ENCODE measurements at regions of chr12 and their contacts with region 1.

Region 1: GRCh38 chr12:45728630-45729232 is 775 bp upstream of the ARID2 start:
- DNase-seq: peak; percentile 94 to 99 (median 96)
- ATAC-seq: peak; percentile 71
- H3K4me3 ChIP-seq: peak overlapping the region; percentile 77
- H3K4me3 Mint-ChIP-seq: peak overlapping the region; percentile 100
- H3K27ac ChIP-seq: peak overlapping the region; percentile 98 to 99
- H3K27ac Mint-ChIP-seq: peak overlapping the region; percentile 84
- H3K4me1 ChIP-seq: peaks cover 8% of the 10 kb centered on the region
- H3K4me1 Mint-ChIP-seq: peaks cover 37% of the 10 kb centered on the region
- H3K27me3 ChIP-seq: no peaks in the 10 kb centered on the region
- H3K27me3 Mint-ChIP-seq: no peaks in the 10 kb centered on the region
- CTCF ChIP-seq: peak; percentile 89

Region 2: GRCh38 chr12:45215419-45216229 is 513.1 kb before region 1 on chr12 and contains the start of gene ANO6:
- CTCF ChIA-PET with region 1: interaction called, 5 read pairs
- POLR2A ChIA-PET with region 1: interaction called, 30 read pairs
- intact Hi-C with region 1: loop called in 1 of 2 experiments (anchors 10 kb)
- DNase-seq: peak; percentile 53 to 90 (median 69)
- ATAC-seq: peak; percentile 78
- H3K4me3 ChIP-seq: peak within 1 kb of the TSS; percentile 92
- H3K4me3 Mint-ChIP-seq: peak within 1 kb of the TSS; percentile 93
- H3K27ac ChIP-seq: peak within 1 kb of the TSS; percentile 15 to 73
- H3K27ac Mint-ChIP-seq: peak within 1 kb of the TSS; percentile 86
- H3K4me1 ChIP-seq: peaks cover 20% of the 10 kb centered on the region
- H3K4me1 Mint-ChIP-seq: peaks cover 71% of the 10 kb centered on the region
- H3K27me3 ChIP-seq: no peaks in the 10 kb centered on the region
- H3K27me3 Mint-ChIP-seq: no peaks in the 10 kb centered on the region
- CTCF ChIP-seq: peak; percentile 53
- total RNA-seq, gene ANO6: 11.6 to 11.7 TPM

Region 3: DNA sequence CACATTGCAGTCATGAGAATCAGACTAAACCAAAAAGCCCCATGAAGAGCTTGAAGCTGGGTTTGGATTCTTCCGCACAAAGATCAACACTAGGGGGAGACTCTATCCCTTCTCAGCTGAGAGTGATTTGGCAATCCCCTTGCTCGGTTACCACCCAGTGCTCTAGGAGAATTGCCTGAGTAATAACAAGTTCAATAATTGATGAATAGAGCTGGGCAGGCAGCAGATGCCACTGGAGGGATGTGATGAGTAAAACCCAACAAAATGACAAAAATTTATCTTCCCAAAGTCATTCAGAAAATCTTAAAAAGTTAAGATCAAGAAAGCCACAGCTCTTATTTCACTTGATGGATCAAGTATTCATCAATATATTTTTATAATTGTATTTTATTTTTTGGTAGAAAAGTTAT is 184.8 kb before region 1 on chr12:
- CTCF ChIA-PET with region 1: interaction called, 27 read pairs
- POLR2A ChIA-PET with region 1: interaction called, 31 read pairs
- intact Hi-C with region 1: loop called in 1 of 2 experiments (anchors 2 kb)
- DNase-seq: peak in 12 of 14 experiments; percentile 3 to 83 (median 20)
- ATAC-seq: peak; percentile 87
- H3K4me3 ChIP-seq: no peak overlapping the region
- H3K4me3 Mint-ChIP-seq: no peak overlapping the region
- H3K27ac ChIP-seq: no peak overlapping the region
- H3K27ac Mint-ChIP-seq: no peak overlapping the region
- H3K4me1 ChIP-seq: no peaks in the 10 kb centered on the region
- H3K4me1 Mint-ChIP-seq: no peaks in the 10 kb centered on the region
- H3K27me3 ChIP-seq: no peaks in the 10 kb centered on the region
- H3K27me3 Mint-ChIP-seq: no peaks in the 10 kb centered on the region
- CTCF ChIP-seq: peak; percentile 83

Region 4: GRCh38 chr12:45655201-45655600 is 73.5 kb before region 1 on chr12:
- CTCF ChIA-PET with region 1: interaction called, 17 read pairs
- POLR2A ChIA-PET with region 1: interaction called, 25 read pairs
- intact Hi-C with region 1: loop called (anchors 1 to 5 kb)
- DNase-seq: peak; percentile 33 to 87 (median 55)
- ATAC-seq: peak; percentile 100
- H3K4me3 ChIP-seq: no peak overlapping the region
- H3K4me3 Mint-ChIP-seq: no peak overlapping the region
- H3K27ac ChIP-seq: no peak overlapping the region
- H3K27ac Mint-ChIP-seq: no peak overlapping the region
- H3K4me1 ChIP-seq: no peaks in the 10 kb centered on the region
- H3K4me1 Mint-ChIP-seq: peaks cover 8% of the 10 kb centered on the region
- H3K27me3 ChIP-seq: peaks cover 0 to 8% of the 10 kb centered on the region in 2 experiments
- H3K27me3 Mint-ChIP-seq: peaks cover 12% of the 10 kb centered on the region
- CTCF ChIP-seq: no peak

Region 5: DNA sequence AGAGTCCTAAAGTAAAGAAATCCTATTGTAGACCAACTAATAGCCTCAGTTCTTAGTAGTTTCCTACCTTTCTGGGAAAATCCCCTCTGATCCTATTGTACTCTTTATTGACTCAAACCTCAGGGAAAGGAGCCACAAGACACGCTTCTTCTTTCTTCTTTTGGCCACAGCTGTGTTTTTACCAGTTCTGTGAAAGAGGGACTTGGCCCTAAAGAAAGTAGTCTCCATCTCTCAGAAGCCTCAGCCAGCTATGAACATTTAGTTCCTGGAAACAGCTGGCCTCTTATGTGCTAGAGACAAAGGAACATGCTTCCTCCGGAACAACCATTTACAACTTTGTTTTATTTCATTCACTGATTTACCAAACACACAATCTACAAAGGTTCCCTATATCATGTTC is 65.3 kb before region 1 on chr12:
- CTCF ChIA-PET with region 1: interaction called, 5 read pairs
- POLR2A ChIA-PET with region 1: interaction called, 77 read pairs
- intact Hi-C with region 1: loop called in 1 of 2 experiments (anchors 5 kb)
- DNase-seq: no peak
- ATAC-seq: no peak
- H3K4me3 ChIP-seq: no peak overlapping the region
- H3K4me3 Mint-ChIP-seq: no peak overlapping the region
- H3K27ac ChIP-seq: no peak overlapping the region
- H3K27ac Mint-ChIP-seq: no peak overlapping the region
- H3K4me1 ChIP-seq: no peaks in the 10 kb centered on the region
- H3K4me1 Mint-ChIP-seq: peaks cover 4% of the 10 kb centered on the region
- H3K27me3 ChIP-seq: no peaks in the 10 kb centered on the region
- H3K27me3 Mint-ChIP-seq: peaks cover 5% of the 10 kb centered on the region
- CTCF ChIP-seq: no peak

Region 6: DNA sequence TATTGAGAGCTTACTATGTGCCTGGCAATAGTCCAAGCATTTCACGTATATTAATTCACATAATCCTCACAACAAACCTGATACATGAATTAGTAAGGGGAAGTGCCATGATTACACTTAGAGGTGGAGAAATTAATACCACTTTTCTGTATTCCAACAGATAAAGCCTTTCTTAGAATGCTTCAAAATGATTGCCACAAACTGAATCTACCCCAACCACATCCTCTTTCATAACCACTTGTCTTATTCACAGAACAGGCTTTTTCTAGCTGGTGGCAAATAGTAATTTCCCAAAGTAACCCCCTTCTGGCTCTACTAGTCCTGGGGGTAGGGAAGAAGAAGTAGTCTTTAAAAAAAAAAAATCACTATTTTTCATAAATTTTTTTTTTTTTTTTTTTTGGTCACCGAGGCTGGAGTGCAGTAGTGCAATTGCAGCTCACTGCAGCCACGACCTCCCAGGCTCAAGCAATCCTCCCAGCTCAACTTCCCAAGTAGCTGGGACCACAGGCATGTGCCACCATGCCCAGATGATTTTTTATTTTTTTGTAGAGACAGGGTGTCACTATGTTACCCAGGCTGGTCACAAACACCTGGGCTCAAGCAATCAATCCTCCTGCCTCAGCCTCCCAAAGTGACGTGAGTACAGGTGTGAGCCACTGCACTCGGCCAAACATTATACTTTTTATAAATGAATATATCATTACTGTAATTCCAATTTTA is 58.2 kb before region 1 on chr12:
- CTCF ChIA-PET with region 1: interaction called, 5 read pairs
- POLR2A ChIA-PET with region 1: interaction called, 77 read pairs
- intact Hi-C with region 1: loop called in 1 of 2 experiments (anchors 5 kb)
- DNase-seq: peak in 3 of 14 experiments; percentile 57 to 86 (median 62)
- ATAC-seq: peak; percentile 79
- H3K4me3 ChIP-seq: no peak overlapping the region
- H3K4me3 Mint-ChIP-seq: peak overlapping the region; percentile 4
- H3K27ac ChIP-seq: no peak overlapping the region
- H3K27ac Mint-ChIP-seq: no peak overlapping the region
- H3K4me1 ChIP-seq: peaks cover 14% of the 10 kb centered on the region
- H3K4me1 Mint-ChIP-seq: peaks cover 27% of the 10 kb centered on the region
- H3K27me3 ChIP-seq: no peaks in the 10 kb centered on the region
- H3K27me3 Mint-ChIP-seq: no peaks in the 10 kb centered on the region
- CTCF ChIP-seq: no peak

Region 7: DNA sequence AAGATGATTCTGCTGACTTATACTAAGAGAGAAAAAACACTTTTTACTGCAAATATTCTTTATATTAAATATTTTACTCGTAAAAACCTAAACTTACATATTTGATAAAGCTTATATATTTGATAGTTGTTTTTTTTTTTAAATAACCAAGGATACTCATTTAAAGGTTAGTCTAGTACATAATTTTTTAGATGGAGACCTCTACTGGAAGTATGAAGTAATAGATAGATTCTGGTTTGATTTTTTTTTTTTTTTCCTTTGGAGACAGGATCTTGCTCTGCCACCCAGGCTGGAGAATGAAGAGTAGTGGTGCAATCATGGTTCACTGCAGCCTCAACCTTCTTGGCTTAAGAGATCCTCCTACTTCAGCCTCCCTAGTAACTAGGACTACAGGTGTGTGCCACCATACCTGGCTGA is 17.1 kb after region 1 on chr12:
- CTCF ChIA-PET with region 1: interaction called, 16 read pairs
- POLR2A ChIA-PET with region 1: interaction called, 98 read pairs
- intact Hi-C with region 1: loop called (anchors 2 kb)
- DNase-seq: peak in 3 of 14 experiments; percentile 34 to 49 (median 47)
- ATAC-seq: peak; percentile 86
- H3K4me3 ChIP-seq: no peak overlapping the region
- H3K4me3 Mint-ChIP-seq: no peak overlapping the region
- H3K27ac ChIP-seq: no peak overlapping the region
- H3K27ac Mint-ChIP-seq: no peak overlapping the region
- H3K4me1 ChIP-seq: peaks cover 19% of the 10 kb centered on the region
- H3K4me1 Mint-ChIP-seq: peaks cover 80% of the 10 kb centered on the region
- H3K27me3 ChIP-seq: no peaks in the 10 kb centered on the region
- H3K27me3 Mint-ChIP-seq: no peaks in the 10 kb centered on the region
- CTCF ChIP-seq: peak; percentile 61